Breast epithelium (tissue), 4 donors: ENCODE measurements at regions of chr3 and their contacts with region 1.

Region 1: DNA sequence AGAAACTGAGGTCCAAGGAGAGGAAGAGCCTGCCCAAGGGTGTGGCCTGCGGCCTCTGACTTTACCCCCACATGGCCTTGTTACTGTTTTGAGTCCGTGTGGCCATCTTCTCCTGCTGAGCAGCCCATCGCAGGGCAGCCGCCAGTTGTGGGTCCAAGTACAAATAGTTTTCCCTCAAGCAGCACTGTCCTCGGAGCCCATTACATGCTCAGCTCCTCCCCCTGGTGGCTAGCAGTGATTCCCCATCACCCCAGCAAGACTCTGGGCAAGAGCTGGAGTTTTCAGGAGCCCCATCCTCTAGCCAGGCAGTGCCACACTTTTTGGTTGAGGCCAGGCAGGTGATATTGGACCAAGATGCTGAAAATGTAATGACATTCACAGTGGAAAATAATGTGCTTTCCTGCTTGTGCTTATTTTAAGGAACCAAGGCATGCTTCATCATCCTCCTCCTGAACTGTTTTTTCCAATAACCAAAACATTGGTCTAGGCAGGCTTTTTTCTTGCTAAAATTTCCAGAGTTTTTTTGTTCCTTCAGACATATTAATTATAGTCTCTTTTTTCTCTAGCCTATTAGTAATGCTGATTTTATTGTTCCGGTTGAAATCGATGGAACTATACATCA is 23.2 kb upstream of the VILL start:
- DNase-seq: no peak
- H3K4me3 ChIP-seq: no peak overlapping the region
- H3K27ac ChIP-seq: no peak overlapping the region
- H3K4me1 ChIP-seq: no peaks in the 10 kb centered on the region
- H3K27me3 ChIP-seq: no peaks in the 10 kb centered on the region
- CTCF ChIP-seq: peak in 2 of 3 donors; percentile 74 to 75
- POLR2A ChIP-seq: no peak

Region 2: DNA sequence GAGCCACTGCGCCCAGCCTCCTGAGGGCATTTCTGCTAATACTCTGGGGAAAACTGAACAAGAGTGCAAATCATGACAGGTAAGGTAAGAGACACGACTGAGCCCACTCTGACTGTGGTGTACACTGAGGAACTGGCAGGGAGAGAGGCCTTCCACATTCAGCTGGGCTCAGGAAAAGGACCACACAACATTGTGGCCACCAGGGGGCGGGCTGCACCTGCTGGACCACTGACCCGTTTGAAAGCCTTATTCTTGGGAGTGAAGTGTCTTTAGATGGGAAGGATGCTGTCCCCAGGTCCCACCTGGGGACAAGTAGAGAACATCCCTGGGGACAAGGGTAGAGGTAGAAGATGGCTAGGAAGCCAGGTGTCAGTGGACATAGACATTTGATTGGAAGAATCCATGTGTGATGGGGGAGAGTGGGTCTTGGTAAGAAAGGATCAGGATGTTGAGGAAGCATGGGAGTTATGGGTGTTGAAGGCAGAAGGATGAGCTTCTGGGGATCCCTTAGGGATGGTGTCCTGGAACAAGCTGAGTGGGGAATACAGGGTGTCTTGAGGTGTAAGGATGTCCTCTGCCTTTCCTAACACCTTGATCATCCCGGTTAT is 111.9 kb before region 1 on chr3:
- intact Hi-C with region 1: loop called (anchors 10 kb)
- DNase-seq: peak; percentile 78 to 89
- H3K4me3 ChIP-seq: no peak overlapping the region
- H3K27ac ChIP-seq: peak overlapping the region; percentile 54 to 61
- H3K4me1 ChIP-seq: peaks cover 0 to 3% of the 10 kb centered on the region in 2 donors
- H3K27me3 ChIP-seq: no peaks in the 10 kb centered on the region
- CTCF ChIP-seq: peak; percentile 90 to 96 (median 93)
- POLR2A ChIP-seq: no peak